ENCODE measurements at regions of chr20 and their contacts with region 1.

Region 1: GRCh38 chr20:50153485-50154377 is at the start of gene PEDS1:
- DNase-seq: peak; percentile 96
- H3K4me3 Mint-ChIP-seq: peak within 1 kb of the TSS; percentile 78
- H3K27ac Mint-ChIP-seq: peak within 1 kb of the TSS; percentile 83
- H3K4me1 Mint-ChIP-seq: peaks cover 36% of the 10 kb centered on the region
- H3K27me3 Mint-ChIP-seq: no peaks in the 10 kb centered on the region
- CTCF ChIP-seq: no peak
- total RNA-seq, gene PEDS1: 36.0 and 37.5 TPM in 2 replicates

Region 2: DNA sequence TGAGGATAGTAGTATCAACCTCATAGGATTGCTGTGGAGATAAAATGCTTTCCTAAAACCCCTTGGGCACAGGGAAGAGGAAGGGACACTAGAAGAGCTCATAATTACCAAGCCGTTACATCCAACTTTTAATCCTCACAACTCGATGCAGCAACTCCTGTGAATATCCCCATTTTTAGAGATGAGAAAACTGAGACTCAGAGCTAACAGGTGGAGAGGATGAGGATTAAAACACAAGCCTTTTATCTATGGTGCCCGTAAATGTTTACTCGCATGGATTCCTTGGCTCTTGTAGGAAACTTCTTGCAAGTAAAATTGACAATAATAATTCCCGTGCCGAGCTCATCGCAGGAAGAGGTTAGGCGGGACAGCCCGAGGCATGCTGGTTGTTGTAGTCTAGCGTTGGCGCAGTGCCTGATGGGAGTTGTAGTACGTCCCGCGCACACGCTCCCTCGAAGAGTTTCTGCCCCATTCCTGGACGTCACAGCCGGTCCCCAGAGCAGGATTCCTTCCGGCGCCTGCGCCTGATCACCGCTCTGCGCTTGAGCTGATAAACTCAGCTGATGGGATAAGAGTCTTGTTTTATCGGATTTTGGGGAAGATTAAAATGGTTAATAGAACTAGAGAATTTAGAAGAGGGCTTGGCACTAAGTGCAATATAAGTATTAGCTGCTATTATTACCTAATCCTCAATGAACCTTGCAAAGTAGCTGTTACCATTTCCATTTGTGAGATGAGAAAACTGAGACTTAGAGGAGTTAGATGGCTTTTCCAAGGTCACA is 37.9 kb before region 1 on chr20:
- CTCF ChIA-PET with region 1: interaction called, 33 read pairs
- intact Hi-C with region 1: no loop called
- DNase-seq: peak; percentile 97
- H3K4me3 Mint-ChIP-seq: peak overlapping the region; percentile 73
- H3K27ac Mint-ChIP-seq: peak overlapping the region; percentile 69
- H3K4me1 Mint-ChIP-seq: peaks cover 53% of the 10 kb centered on the region
- H3K27me3 Mint-ChIP-seq: no peaks in the 10 kb centered on the region
- CTCF ChIP-seq: no peak

Region 3: GRCh38 chr20:50120897-50121693 is 32.6 kb before region 1 on chr20:
- CTCF ChIA-PET with region 1: interaction called, 33 read pairs
- intact Hi-C with region 1: no loop called
- DNase-seq: peak; percentile 84
- H3K4me3 Mint-ChIP-seq: no peak overlapping the region
- H3K27ac Mint-ChIP-seq: peak overlapping the region; percentile 39
- H3K4me1 Mint-ChIP-seq: peaks cover 12% of the 10 kb centered on the region
- H3K27me3 Mint-ChIP-seq: no peaks in the 10 kb centered on the region
- CTCF ChIP-seq: peak; percentile 98

Region 4: DNA sequence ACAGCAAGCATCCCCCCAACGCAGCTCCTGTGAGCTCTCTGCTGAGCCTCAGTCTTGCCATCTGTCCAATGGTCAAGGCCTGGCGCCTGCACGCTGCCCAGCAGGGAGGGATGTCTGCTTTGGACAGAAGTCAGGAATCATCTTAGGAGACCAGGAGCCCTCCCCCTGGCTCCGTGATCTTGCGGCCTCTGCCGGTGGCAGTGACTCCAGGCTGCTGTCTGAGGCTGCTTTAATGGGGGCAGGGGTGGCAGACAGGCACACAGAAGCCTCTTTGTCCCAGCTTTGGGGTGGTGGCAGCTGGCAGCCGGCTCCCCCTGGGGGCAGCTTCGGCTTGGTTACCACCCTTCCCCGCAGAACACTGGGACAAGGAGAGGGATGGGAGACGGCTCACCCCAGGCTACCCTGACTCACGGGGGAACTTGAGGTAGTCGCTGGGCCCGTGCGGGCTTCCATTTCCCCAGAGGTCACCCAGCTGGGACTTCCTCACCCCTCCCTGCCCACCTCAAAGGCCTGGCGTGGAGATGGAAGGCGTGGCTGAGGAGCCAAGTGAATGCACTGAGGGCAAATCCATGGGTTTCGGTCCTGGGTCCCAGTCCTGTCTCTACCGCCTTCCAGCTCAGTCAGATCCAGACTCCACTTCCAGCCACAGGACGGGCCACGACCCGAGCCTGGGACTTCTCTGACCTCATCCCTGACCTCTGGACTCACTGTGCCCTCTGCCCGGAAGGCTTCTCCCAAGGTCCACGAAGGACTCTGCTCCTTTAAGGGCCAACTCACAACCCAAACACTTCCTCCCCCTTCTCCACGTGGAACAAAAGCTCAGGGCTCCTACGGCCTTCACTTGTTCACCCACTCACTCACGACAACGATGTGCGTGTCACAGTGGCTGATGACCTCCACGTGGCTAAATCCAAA is 15.0 kb before region 1 on chr20:
- CTCF ChIA-PET with region 1: interaction called, 33 read pairs
- intact Hi-C with region 1: no loop called
- DNase-seq: peak; percentile 96
- H3K4me3 Mint-ChIP-seq: peak overlapping the region; percentile 36
- H3K27ac Mint-ChIP-seq: peak overlapping the region; percentile 61
- H3K4me1 Mint-ChIP-seq: peaks cover 54% of the 10 kb centered on the region
- H3K27me3 Mint-ChIP-seq: no peaks in the 10 kb centered on the region
- CTCF ChIP-seq: peak; percentile 69

Region 5: GRCh38 chr20:50179507-50180016 is 25.8 kb after region 1 on chr20:
- CTCF ChIA-PET with region 1: interaction called, 15 read pairs
- intact Hi-C with region 1: no loop called
- DNase-seq: no peak
- H3K4me3 Mint-ChIP-seq: no peak overlapping the region
- H3K27ac Mint-ChIP-seq: peak overlapping the region; percentile 22
- H3K4me1 Mint-ChIP-seq: peaks cover 9% of the 10 kb centered on the region
- H3K27me3 Mint-ChIP-seq: no peaks in the 10 kb centered on the region
- CTCF ChIP-seq: peak; percentile 62